ENCODE measurements at regions of chr3 and their contacts with region 1.

Region 1: GRCh38 chr3:14402304-14402811 is at the start of gene SLC6A6:
- DNase-seq: peak; percentile 87 to 98 (median 92)
- ATAC-seq: peak; percentile 76 to 85 (median 82)
- H3K4me3 ChIP-seq: peak within 1 kb of the TSS; percentile 73 to 82
- H3K4me3 Mint-ChIP-seq: peak within 1 kb of the TSS; percentile 92 to 100 (median 97)
- H3K27ac ChIP-seq: peak within 1 kb of the TSS; percentile 71
- H3K27ac Mint-ChIP-seq: peak within 1 kb of the TSS; percentile 96
- H3K4me1 ChIP-seq: peaks cover 8 to 50% of the 10 kb centered on the region in 2 experiments
- H3K4me1 Mint-ChIP-seq: peaks cover 46 to 52% (median 46%) of the 10 kb centered on the region in 3 donors
- H3K27me3 ChIP-seq: no peaks in the 10 kb centered on the region
- H3K27me3 Mint-ChIP-seq: no peaks in the 10 kb centered on the region
- total RNA-seq, gene SLC6A6: 49.3 to 72.5 (median 63.6) TPM

Region 2: DNA sequence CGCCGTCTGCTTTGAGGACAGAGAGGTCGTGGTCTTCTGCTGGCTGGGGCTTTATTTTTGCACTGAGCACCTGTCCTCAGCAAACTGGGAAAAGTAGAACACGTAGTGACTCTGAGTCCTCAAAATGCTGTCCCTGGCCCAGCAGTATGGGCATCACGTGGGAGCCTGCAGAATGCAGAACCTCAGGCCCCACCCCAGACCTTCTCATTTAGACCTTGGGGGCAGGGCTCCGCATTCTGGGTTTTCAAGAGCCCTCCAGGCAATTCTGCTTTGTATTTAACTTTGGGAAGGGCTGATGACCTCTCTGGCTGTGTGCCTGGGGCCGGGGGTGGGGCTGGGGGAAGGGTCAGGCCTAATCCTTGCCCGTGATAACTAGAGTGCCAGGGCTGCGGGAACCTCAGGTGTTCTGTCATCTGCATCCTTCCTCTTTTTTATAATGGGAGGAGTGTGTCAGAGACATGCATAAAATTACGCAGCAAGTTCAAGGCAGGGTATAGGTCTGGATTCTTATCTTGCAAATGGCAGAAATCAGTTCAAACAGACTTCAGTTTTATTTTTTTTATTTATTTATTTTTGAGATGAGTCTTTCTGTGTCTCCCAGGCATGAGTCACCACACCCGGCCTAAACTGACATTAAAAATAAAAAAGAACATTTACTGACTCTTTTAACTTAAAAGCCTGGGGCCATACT is 11.2 kb after region 1 on chr3:
- CTCF ChIA-PET with region 1: no interaction called
- POLR2A ChIA-PET with region 1: no interaction called
- DNase-seq: no peak
- ATAC-seq: no peak
- H3K4me3 ChIP-seq: no peak overlapping the region
- H3K4me3 Mint-ChIP-seq: no peak overlapping the region
- H3K27ac ChIP-seq: no peak overlapping the region
- H3K27ac Mint-ChIP-seq: no peak overlapping the region
- H3K4me1 ChIP-seq: peaks cover 0 to 24% of the 10 kb centered on the region in 2 experiments
- H3K4me1 Mint-ChIP-seq: peaks cover 20 to 32% (median 20%) of the 10 kb centered on the region in 3 donors
- H3K27me3 ChIP-seq: no peaks in the 10 kb centered on the region
- H3K27me3 Mint-ChIP-seq: no peaks in the 10 kb centered on the region

Region 3: DNA sequence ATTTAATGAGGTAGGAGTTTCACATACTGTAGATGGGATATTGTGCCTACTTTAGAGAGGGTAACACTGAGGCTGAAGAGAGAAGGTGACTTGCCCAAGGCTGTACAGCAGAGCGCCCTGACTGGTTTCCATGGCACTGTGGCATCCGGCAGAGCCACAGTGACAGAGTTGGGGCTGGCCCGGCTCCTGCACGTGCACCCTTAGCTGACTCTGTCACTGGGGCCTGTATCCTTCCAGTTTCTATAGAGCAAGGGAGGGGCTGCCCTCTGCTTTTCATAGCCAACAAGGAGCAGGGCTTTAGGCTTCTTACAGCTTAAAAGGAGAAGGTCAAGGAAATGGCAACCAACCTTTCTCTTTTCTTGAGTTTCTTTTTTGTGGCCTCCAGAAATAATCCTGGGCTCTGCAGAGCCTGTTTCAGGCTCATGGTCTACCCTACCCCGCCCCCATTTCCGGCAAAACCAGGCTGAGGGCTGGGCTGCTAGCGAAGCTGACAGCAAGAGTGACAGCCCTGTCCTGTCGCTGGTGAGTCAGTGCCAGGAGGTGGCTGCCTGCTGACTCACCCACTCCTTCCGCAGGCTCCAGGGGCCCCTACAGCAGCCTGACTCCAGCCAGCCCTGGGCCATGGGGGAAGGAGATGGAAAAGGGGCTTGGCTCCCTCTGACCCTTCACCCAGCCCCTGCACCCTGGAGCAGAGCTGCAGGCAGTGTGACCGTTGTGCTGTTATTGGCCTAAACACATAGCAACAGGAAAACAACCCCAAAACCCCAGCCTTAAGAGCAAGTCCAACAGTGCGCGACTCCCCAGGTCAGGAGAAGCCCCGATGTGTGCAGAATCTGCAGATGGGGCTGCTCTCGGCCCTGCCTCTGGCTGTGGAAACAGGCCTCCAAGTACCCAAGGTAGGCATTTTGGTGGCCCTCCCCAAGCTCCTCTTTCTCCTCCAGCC is 29.8 kb after region 1 on chr3:
- CTCF ChIA-PET with region 1: interaction called in 1 of 2 experiments, 19 read pairs
- POLR2A ChIA-PET with region 1: interaction called, 3 to 16 read pairs
- DNase-seq: peak; percentile 75 to 96 (median 93)
- ATAC-seq: peak; percentile 89 to 92 (median 90)
- H3K4me3 ChIP-seq: peak overlapping the region; percentile 1 to 37
- H3K4me3 Mint-ChIP-seq: peak overlapping the region; percentile 67 to 77 (median 76)
- H3K27ac ChIP-seq: peak overlapping the region; percentile 97
- H3K27ac Mint-ChIP-seq: peak overlapping the region; percentile 99
- H3K4me1 ChIP-seq: peaks cover 22 to 93% of the 10 kb centered on the region in 2 experiments
- H3K4me1 Mint-ChIP-seq: peaks cover 66 to 95% (median 91%) of the 10 kb centered on the region in 3 donors
- H3K27me3 ChIP-seq: no peaks in the 10 kb centered on the region
- H3K27me3 Mint-ChIP-seq: no peaks in the 10 kb centered on the region

Region 4: GRCh38 chr3:14461748-14462324 is 59.5 kb after region 1 on chr3:
- CTCF ChIA-PET with region 1: interaction called, 3 to 10 read pairs
- POLR2A ChIA-PET with region 1: no interaction called
- DNase-seq: peak in 29 of 35 experiments; percentile 13 to 63 (median 31)
- ATAC-seq: peak; percentile 48 to 74 (median 64)
- H3K4me3 ChIP-seq: no peak overlapping the region
- H3K4me3 Mint-ChIP-seq: no peak overlapping the region
- H3K27ac ChIP-seq: no peak overlapping the region
- H3K27ac Mint-ChIP-seq: no peak overlapping the region
- H3K4me1 ChIP-seq: no peaks in the 10 kb centered on the region
- H3K4me1 Mint-ChIP-seq: peaks cover 0 to 4% (median 0%) of the 10 kb centered on the region in 3 donors
- H3K27me3 ChIP-seq: no peaks in the 10 kb centered on the region
- H3K27me3 Mint-ChIP-seq: no peaks in the 10 kb centered on the region

Region 5: GRCh38 chr3:14730703-14731382 is 328.5 kb after region 1 on chr3:
- CTCF ChIA-PET with region 1: no interaction called
- POLR2A ChIA-PET with region 1: no interaction called
- DNase-seq: no peak
- ATAC-seq: no peak
- H3K4me3 ChIP-seq: no peak overlapping the region
- H3K4me3 Mint-ChIP-seq: no peak overlapping the region
- H3K27ac ChIP-seq: no peak overlapping the region
- H3K27ac Mint-ChIP-seq: no peak overlapping the region
- H3K4me1 ChIP-seq: no peaks in the 10 kb centered on the region
- H3K4me1 Mint-ChIP-seq: no peaks in the 10 kb centered on the region
- H3K27me3 ChIP-seq: no peaks in the 10 kb centered on the region
- H3K27me3 Mint-ChIP-seq: no peaks in the 10 kb centered on the region